Activated B cell treated with CpG ODN at 0.5 μM for 24 hours (primary cell): ENCODE measurements at regions of chr3 and their contacts with region 1.

Region 1: DNA sequence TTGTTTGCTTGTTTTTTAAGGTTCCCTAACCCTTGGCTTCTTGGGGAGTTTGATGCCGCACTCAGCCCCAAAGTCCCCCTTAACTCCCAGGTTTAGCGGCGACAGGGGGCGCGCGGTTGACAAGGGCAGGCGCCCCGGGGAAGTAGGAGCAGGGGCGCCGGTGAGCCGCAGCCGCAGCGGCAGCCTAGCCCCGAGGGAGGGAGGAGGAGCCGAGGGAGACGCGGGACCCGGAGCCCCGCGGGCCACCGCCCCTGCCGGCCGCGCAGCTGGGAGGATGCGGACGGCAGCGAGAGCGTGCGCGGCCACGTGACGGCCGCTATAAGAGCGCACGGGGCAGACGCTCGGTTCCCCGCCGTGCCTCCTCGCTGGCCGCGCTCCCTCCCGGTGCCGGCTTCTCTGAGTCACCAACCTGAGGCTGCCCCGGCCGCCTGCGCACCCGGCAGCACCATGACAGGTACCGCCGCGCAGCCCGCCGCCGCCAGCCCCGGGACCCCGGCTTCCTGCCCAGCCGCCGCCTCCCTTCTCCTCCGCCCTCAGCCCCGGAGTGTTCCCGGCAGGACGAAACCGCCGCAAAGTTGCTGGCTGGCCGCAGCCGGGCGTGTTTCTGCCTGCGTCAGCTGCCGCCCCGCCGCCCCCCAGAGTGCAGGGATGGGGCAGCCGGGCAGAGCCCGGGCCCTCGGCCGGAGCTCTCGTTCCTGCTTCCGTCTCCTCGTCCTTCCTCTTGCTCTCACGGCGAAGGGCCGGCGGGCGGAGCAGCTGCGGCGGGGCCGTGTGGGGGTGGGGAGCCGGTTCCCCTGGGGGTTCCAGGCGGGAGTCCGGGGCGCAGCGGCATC is at the start of gene GYG1:
- DNase-seq: peak; percentile 72
- ATAC-seq: peak; percentile 91
- H3K4me3 Mint-ChIP-seq: peak within 1 kb of the TSS; percentile 84
- H3K27ac Mint-ChIP-seq: peak within 1 kb of the TSS; percentile 69
- H3K4me1 Mint-ChIP-seq: peaks cover 21% of the 10 kb centered on the region
- H3K27me3 Mint-ChIP-seq: no peaks in the 10 kb centered on the region
- CTCF ChIP-seq: no peak
- total RNA-seq, gene GYG1: 20.2 and 21.8 TPM in 2 replicates

Region 2: DNA sequence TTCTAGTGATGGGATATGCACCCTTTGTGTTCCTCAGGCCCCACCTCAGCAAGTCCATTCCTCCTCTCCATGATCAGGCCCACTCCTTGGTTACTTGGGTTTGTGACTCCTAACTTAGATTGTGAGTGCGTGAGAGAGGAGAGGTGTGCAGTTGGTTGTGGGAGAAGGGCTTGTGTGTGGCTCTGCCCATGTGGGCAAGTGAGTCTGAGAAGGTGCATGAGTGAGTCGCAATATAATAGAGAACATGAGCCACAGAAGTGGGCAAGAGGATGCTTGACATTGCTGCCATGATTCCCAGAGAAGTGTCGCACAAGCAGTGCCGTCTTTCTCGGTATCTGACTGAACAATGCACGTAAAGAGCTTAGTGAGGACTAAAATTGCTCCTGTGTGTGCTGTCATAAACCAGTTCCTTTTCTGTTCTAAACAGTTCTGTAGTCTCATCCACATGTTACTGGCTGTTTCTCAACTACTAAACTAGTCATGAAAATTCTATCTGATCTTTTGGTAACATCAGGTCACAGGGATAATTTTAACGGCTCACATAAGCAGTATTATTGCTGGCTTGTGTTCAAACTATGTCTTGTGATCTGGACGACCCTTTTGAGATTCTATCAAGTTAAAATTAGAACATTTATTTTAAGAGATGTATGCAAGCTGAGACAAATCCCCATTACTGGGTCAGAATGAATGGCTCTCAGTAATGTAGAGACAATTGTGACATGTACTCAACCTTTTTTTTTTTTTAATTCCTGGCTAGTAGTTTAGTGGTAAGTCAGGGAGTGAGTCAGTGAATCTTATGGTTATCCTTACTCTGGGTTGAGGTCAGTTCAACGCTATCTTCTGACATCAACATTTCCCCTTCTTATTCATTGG is 25.5 kb after region 1 on chr3:
- CTCF ChIA-PET with region 1: no interaction called
- POLR2A ChIA-PET with region 1: no interaction called
- intact Hi-C with region 1: no loop called
- DNase-seq: no peak
- ATAC-seq: no peak
- H3K4me3 Mint-ChIP-seq: no peak overlapping the region
- H3K27ac Mint-ChIP-seq: no peak overlapping the region
- H3K4me1 Mint-ChIP-seq: no peaks in the 10 kb centered on the region
- H3K27me3 Mint-ChIP-seq: no peaks in the 10 kb centered on the region
- CTCF ChIP-seq: no peak

Region 3: GRCh38 chr3:149086232-149086988 is 95.0 kb after region 1 on chr3 and contains the start of gene HLTF:
- CTCF ChIA-PET with region 1: no interaction called
- POLR2A ChIA-PET with region 1: no interaction called
- intact Hi-C with region 1: loop called (anchors 1 kb)
- DNase-seq: peak; percentile 80
- ATAC-seq: peak; percentile 99
- H3K4me3 Mint-ChIP-seq: peak within 1 kb of the TSS; percentile 99
- H3K27ac Mint-ChIP-seq: peak within 1 kb of the TSS; percentile 87
- H3K4me1 Mint-ChIP-seq: peaks cover 32% of the 10 kb centered on the region
- H3K27me3 Mint-ChIP-seq: no peaks in the 10 kb centered on the region
- CTCF ChIP-seq: no peak
- total RNA-seq, gene HLTF: 16.4 and 18.3 TPM in 2 replicates

Region 4: GRCh38 chr3:149752051-149752787 is 760.8 kb after region 1 on chr3 and contains the start of gene COMMD2:
- CTCF ChIA-PET with region 1: no interaction called
- POLR2A ChIA-PET with region 1: interaction called, 4 read pairs
- intact Hi-C with region 1: loop called (anchors 5 kb)
- DNase-seq: peak; percentile 68
- ATAC-seq: peak; percentile 99
- H3K4me3 Mint-ChIP-seq: peak within 1 kb of the TSS; percentile 98
- H3K27ac Mint-ChIP-seq: peak within 1 kb of the TSS; percentile 92
- H3K4me1 Mint-ChIP-seq: peaks cover 30% of the 10 kb centered on the region
- H3K27me3 Mint-ChIP-seq: peaks cover 7% of the 10 kb centered on the region
- CTCF ChIP-seq: no peak
- total RNA-seq, gene COMMD2: 41.5 and 45.6 TPM in 2 replicates